ENCODE measurements at regions of chr6 and their contacts with region 1.

Region 1: GRCh38 chr6:144931172-144932035 is 646.3 kb downstream of the UTRN start:
- DNase-seq: peak in 1 of 2 donors; percentile 8
- ATAC-seq: no peak
- H3K4me3 ChIP-seq: no peak overlapping the region
- H3K27ac ChIP-seq: no peak overlapping the region
- H3K4me1 ChIP-seq: no peaks in the 10 kb centered on the region
- H3K27me3 ChIP-seq: no peaks in the 10 kb centered on the region
- CTCF ChIP-seq: peak in 8 of 9 donors; percentile 28 to 70 (median 55)

Region 2: GRCh38 chr6:145206247-145206907 is 275.0 kb after region 1 on chr6:
- intact Hi-C with region 1: loop called in 1 of 10 experiments (anchors 10 kb)
- DNase-seq: no peak
- ATAC-seq: peak in 7 of 8 donors; percentile 33 to 66 (median 54)
- H3K4me3 ChIP-seq: no peak overlapping the region
- H3K27ac ChIP-seq: peak overlapping the region in 2 of 10 donors; percentile 7 to 27
- H3K4me1 ChIP-seq: peaks cover 0 to 17% (median 0%) of the 10 kb centered on the region in 9 donors
- H3K27me3 ChIP-seq: no peaks in the 10 kb centered on the region
- CTCF ChIP-seq: no peak

Region 3: DNA sequence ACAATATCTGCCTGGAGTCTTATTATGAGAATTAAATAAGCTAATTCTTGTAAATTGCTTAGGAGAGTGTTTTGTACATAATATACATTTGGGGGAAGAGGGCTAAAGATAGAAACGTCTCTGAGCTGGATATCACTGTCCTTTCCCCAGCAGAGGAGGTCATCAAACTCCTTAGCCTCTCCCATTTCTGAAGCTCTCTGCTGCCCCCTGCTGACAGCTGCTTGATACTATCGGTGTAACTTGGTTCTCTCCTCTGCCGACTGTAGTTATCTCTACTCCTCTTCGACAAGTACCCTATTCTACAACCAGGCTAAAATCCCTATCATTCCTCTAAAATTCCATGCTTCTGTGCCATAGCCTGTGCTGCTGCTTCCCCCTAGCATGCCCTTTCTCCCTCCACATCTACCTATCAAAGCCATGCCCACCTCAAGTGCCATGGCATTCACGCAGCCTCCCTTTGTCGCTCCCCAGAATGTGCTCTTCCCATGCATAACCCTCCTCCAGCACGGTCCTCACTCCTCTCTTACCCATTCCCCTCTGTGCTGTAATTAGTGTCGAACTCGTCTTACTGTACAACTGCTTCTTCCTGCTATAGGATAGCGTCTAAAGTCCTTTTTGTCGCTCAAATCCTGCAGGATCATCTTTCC is 702.7 kb after region 1 on chr6:
- intact Hi-C with region 1: loop called in 1 of 10 experiments (anchors 10 kb)
- DNase-seq: peak; percentile 83 to 85
- ATAC-seq: peak; percentile 73 to 93 (median 91)
- H3K4me3 ChIP-seq: no peak overlapping the region
- H3K27ac ChIP-seq: no peak overlapping the region
- H3K4me1 ChIP-seq: peaks cover 0 to 20% (median 7%) of the 10 kb centered on the region in 9 donors
- H3K27me3 ChIP-seq: no peaks in the 10 kb centered on the region
- CTCF ChIP-seq: peak; percentile 75 to 93 (median 88)

Measured in heart right ventricle (tissue), 16 donors.